ENCODE measurements at regions of chr12 and their contacts with region 1.

Region 1: GRCh38 chr12:43882578-43883178 is 46.8 kb downstream of the TMEM117 start:
- DNase-seq: peak; percentile 17
- ATAC-seq: peak; percentile 90
- H3K4me3 ChIP-seq: no peak overlapping the region
- H3K27ac ChIP-seq: no peak overlapping the region
- H3K4me1 ChIP-seq: no peaks in the 10 kb centered on the region
- H3K27me3 ChIP-seq: no peaks in the 10 kb centered on the region
- CTCF ChIP-seq: peak; percentile 78 to 85 (median 85); a peak in 5 of 6 replicates
- EP300 ChIP-seq: no peak
- POLR2A ChIP-seq: no peak
- RAD21 ChIP-seq: peak; percentile 98

Region 2: DNA sequence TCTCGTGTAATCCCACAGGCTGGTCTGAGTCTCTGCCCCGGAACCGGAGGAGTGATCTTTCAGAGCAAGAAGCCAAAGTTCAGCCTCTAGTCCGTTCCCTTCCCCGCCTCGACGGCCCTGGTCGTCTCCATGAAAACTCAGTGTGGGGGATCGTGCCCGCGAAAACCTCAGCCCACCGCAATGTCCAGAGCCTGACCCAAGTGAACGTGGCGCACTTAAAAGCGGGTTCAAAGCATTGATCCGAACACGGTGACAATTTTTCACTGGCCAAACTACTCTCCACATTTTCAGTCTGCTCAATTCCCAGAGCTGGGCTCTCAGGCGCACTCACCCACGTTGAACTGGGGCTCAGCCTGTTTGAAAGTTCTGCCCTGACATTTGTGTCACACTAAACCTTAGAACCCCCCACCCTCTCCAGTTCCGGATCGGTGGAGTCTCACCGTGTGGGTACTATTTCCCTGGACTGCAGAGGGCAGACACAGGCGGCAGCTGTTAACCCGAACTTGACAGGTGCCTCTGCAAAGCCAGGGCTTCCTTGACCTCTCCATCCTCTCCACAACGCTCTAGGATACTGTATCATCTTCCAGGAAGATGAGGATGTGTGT is 1292.2 kb before region 1 on chr12:
- CTCF ChIA-PET with region 1: no interaction called
- POLR2A ChIA-PET with region 1: no interaction called
- RAD21 ChIA-PET with region 1: no interaction called
- SMC1A ChIA-PET with region 1: no interaction called
- in situ Hi-C with region 1: no loop called
- intact Hi-C with region 1: no loop called
- DNase-seq: no peak
- ATAC-seq: peak; percentile 24; the same call in 2 of the 3 replicates
- H3K4me3 ChIP-seq: peak overlapping the region; percentile 25; the same call in 1 of the 2 replicates
- H3K27ac ChIP-seq: no peak overlapping the region
- H3K4me1 ChIP-seq: peaks cover 8% of the 10 kb centered on the region
- H3K27me3 ChIP-seq: peaks cover 6 to 26% of the 10 kb centered on the region in 2 experiments
- CTCF ChIP-seq: no peak
- EP300 ChIP-seq: no peak
- POLR2A ChIP-seq: no peak
- RAD21 ChIP-seq: no peak

Region 3: GRCh38 chr12:43501703-43502102 is 381.0 kb before region 1 on chr12:
- CTCF ChIA-PET with region 1: interaction called, 12 read pairs
- POLR2A ChIA-PET with region 1: no interaction called
- RAD21 ChIA-PET with region 1: interaction called, 4 read pairs
- SMC1A ChIA-PET with region 1: interaction called, 6 read pairs
- in situ Hi-C with region 1: no loop called
- intact Hi-C with region 1: loop called (anchors 1 kb)
- DNase-seq: no peak
- ATAC-seq: no peak
- H3K4me3 ChIP-seq: no peak overlapping the region
- H3K27ac ChIP-seq: no peak overlapping the region
- H3K4me1 ChIP-seq: no peaks in the 10 kb centered on the region
- H3K27me3 ChIP-seq: no peaks in the 10 kb centered on the region
- CTCF ChIP-seq: peak; percentile 4 to 44 (median 23); a peak in 2 of 6 replicates
- EP300 ChIP-seq: no peak
- POLR2A ChIP-seq: no peak
- RAD21 ChIP-seq: peak; percentile 55

Region 4: DNA sequence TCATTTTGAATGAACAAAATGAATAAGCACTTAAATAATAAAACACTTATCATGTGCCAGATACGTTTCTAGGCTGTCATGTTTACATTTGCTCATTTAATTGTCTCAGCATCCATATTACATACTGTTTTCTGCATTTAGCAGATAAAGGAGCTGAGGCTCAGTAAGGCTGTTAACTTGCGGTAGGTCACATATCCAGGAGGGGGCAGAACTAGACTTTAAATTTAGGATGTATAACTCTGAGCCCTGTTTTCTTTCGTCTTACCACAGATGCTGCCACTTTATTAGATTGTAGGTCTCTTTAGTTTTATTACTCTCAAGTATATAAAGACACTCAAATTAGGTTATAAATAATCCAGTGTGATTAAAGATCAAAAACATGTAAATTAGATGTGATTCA is 106.2 kb before region 1 on chr12:
- CTCF ChIA-PET with region 1: interaction called, 59 read pairs
- POLR2A ChIA-PET with region 1: interaction called, 4 read pairs
- RAD21 ChIA-PET with region 1: interaction called, 43 read pairs
- SMC1A ChIA-PET with region 1: interaction called, 39 read pairs
- in situ Hi-C with region 1: loop called (anchors 5 kb)
- intact Hi-C with region 1: loop called (anchors 1 kb)
- DNase-seq: no peak
- ATAC-seq: peak; percentile 75
- H3K4me3 ChIP-seq: no peak overlapping the region
- H3K27ac ChIP-seq: no peak overlapping the region
- H3K4me1 ChIP-seq: no peaks in the 10 kb centered on the region
- H3K27me3 ChIP-seq: no peaks in the 10 kb centered on the region
- CTCF ChIP-seq: peak in 2 of 3 experiments; percentile 29 to 35; a peak in 3 of 6 replicates
- EP300 ChIP-seq: no peak
- POLR2A ChIP-seq: no peak
- RAD21 ChIP-seq: peak; percentile 40; the same call in 1 of the 2 replicates

Region 5: GRCh38 chr12:43872396-43872795 is 10.3 kb before region 1 on chr12:
- CTCF ChIA-PET with region 1: interaction called, 9 read pairs
- POLR2A ChIA-PET with region 1: no interaction called
- RAD21 ChIA-PET with region 1: interaction called, 4 read pairs
- SMC1A ChIA-PET with region 1: interaction called, 15 read pairs
- in situ Hi-C with region 1: no loop called
- intact Hi-C with region 1: no loop called
- DNase-seq: no peak
- ATAC-seq: no peak
- H3K4me3 ChIP-seq: no peak overlapping the region
- H3K27ac ChIP-seq: no peak overlapping the region
- H3K4me1 ChIP-seq: no peaks in the 10 kb centered on the region
- H3K27me3 ChIP-seq: no peaks in the 10 kb centered on the region
- CTCF ChIP-seq: no peak
- EP300 ChIP-seq: no peak
- POLR2A ChIP-seq: no peak
- RAD21 ChIP-seq: no peak

Region 6: GRCh38 chr12:43976027-43976426 is 93.3 kb after region 1 on chr12:
- CTCF ChIA-PET with region 1: no interaction called
- POLR2A ChIA-PET with region 1: no interaction called
- RAD21 ChIA-PET with region 1: no interaction called
- SMC1A ChIA-PET with region 1: no interaction called
- in situ Hi-C with region 1: no loop called
- intact Hi-C with region 1: no loop called
- DNase-seq: no peak
- ATAC-seq: peak; percentile 52; the same call in 2 of the 3 replicates
- H3K4me3 ChIP-seq: no peak overlapping the region
- H3K27ac ChIP-seq: no peak overlapping the region
- H3K4me1 ChIP-seq: no peaks in the 10 kb centered on the region
- H3K27me3 ChIP-seq: no peaks in the 10 kb centered on the region
- CTCF ChIP-seq: no peak
- EP300 ChIP-seq: no peak
- POLR2A ChIP-seq: no peak
- RAD21 ChIP-seq: no peak

Measured in GM12878 (cell line).